OCI-LY7 (cell line): ENCODE measurements at regions of chr6 and their contacts with region 1.

Region 1: GRCh38 chr6:3251462-3252314 is 7.1 kb upstream of the PSMG4 start:
- DNase-seq: peak; percentile 70
- H3K4me3 ChIP-seq: no peak overlapping the region
- H3K27ac ChIP-seq: no peak overlapping the region
- H3K4me1 ChIP-seq: no peaks in the 10 kb centered on the region
- CTCF ChIP-seq: peak; percentile 95

Region 2: DNA sequence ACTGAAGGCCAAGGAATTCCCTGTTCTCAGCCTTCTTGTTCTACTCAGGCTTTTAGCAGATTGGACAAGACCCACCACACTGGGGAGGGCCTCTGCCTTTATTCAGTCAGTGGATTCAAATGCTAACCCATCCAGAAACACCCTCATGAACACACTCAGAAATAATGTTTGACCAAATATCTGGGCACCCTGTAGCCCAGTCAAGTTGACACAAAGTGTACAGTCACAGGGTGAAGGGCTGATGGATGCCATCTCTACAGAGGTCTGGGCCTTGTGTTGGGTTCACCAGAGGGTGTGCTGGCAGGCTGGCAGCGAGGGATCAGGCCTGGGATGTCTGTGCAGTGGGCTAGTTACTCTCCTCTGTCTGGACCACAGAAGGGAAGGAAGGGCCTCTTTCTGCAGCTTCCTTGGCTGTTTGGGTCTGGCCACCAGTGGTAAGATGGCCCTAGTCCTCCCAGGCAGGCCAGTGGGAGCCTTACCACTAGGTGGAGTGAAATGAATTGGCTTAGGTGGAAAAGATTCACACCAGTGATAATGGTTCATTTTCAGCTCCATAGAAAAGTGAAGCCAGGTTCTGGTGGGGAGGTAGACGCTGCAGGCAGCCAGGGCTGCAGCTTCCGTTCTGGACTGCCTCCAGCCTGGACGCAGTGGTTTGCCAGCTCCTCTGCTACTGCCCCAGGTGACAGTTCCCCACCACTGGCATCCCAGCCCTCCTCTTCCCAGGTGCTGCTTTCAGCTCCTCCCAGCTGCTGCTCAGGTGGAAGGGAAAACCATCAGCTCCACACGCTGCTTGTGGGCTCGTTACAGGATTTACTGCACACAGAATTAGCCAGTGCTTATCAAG is 103.6 kb before region 1 on chr6:
- CTCF ChIA-PET with region 1: no interaction called
- POLR2A ChIA-PET with region 1: interaction called, 3 read pairs
- intact Hi-C with region 1: loop called (anchors 2 kb)
- DNase-seq: no peak
- H3K4me3 ChIP-seq: no peak overlapping the region
- H3K27ac ChIP-seq: no peak overlapping the region
- H3K4me1 ChIP-seq: peaks cover 20% of the 10 kb centered on the region
- CTCF ChIP-seq: peak; percentile 37; the same call in 1 of the 2 replicates